Naive thymus-derived CD8-positive, alpha-beta T cell (primary cell): ENCODE measurements at regions of chr2 and their contacts with region 1.

Region 1: DNA sequence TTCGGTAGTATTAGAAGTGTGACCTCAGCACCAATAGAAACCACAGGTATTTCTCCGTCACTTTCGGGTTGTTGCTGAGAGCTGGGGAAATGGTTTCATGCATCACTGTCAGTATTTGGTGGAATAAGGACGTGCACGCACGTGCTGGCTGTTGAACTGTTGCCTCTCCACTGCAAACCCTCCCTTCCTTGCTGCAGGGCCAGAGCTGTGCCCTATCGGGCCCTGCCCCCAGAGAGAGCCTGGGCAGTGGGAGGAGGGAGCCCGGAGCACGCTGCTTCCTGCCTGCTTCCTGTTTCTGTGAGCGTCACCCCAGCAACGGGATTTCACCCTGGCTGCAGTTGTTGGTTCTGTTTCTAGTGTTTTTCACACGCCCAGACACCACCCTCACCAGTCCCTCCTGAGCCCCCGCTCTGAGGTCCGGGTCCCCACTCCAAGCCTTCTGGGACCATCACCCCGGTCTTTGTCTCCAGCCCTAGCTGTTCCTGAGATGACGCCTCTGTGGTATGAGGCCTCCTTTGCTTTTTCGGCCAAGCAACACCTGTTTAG is 47.4 kb downstream of the LRRFIP1 start:
- DNase-seq: peak; percentile 70 to 97 (median 89)
- ATAC-seq: peak; percentile 62 to 65
- H3K4me3 Mint-ChIP-seq: peak overlapping the region; percentile 84 to 95 (median 90)
- H3K27ac Mint-ChIP-seq: peak overlapping the region; percentile 98 to 100 (median 100)
- H3K4me1 Mint-ChIP-seq: peaks cover 28 to 81% (median 55%) of the 10 kb centered on the region in 4 donors
- H3K27me3 Mint-ChIP-seq: peaks cover 0 to 4% (median 0%) of the 10 kb centered on the region in 5 donors

Region 2: DNA sequence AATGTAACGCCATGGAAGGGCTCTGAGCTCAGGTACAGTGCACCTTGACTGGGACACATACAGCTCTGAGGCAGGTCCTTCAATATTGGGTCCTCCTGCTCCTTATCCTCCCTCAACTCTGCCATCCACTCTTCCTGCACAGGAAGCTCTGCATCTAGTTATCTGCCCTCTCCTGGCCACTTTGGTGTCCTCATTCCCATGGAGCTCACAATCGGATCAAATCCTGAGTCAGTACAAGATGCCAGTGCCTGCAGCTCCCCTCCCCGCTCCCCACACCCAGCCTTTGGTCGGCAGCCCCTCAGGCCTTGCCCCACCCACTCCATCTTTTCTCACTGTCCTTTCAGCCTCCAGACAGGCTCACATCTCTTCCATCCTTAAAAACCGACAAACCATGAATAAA is 10.6 kb after region 1 on chr2:
- POLR2A ChIA-PET with region 1: interaction called, 338 read pairs
- DNase-seq: no peak
- ATAC-seq: no peak
- H3K4me3 Mint-ChIP-seq: no peak overlapping the region
- H3K27ac Mint-ChIP-seq: peak overlapping the region; percentile 19 to 100 (median 98)
- H3K4me1 Mint-ChIP-seq: peaks cover 18 to 58% (median 46%) of the 10 kb centered on the region in 4 donors
- H3K27me3 Mint-ChIP-seq: no peaks in the 10 kb centered on the region

Region 3: GRCh38 chr2:237691908-237692600 is 17.2 kb after region 1 on chr2:
- POLR2A ChIA-PET with region 1: interaction called, 338 read pairs
- DNase-seq: peak; percentile 81 to 99 (median 91)
- ATAC-seq: peak; percentile 57 to 60
- H3K4me3 Mint-ChIP-seq: peak overlapping the region; percentile 83 to 98 (median 92)
- H3K27ac Mint-ChIP-seq: peak overlapping the region in 9 of 10 donors; percentile 91 to 100 (median 95)
- H3K4me1 Mint-ChIP-seq: peaks cover 39 to 82% (median 78%) of the 10 kb centered on the region in 4 donors
- H3K27me3 Mint-ChIP-seq: no peaks in the 10 kb centered on the region

Region 4: GRCh38 chr2:237744613-237745249 is 69.9 kb after region 1 on chr2:
- POLR2A ChIA-PET with region 1: interaction called, 24 read pairs
- DNase-seq: peak; percentile 57 to 88 (median 76)
- ATAC-seq: peak; percentile 74 to 89
- H3K4me3 Mint-ChIP-seq: peak overlapping the region in 2 of 10 donors; percentile 39 to 54
- H3K27ac Mint-ChIP-seq: peak overlapping the region; percentile 81 to 96 (median 91)
- H3K4me1 Mint-ChIP-seq: peaks cover 25 to 54% (median 48%) of the 10 kb centered on the region in 4 donors
- H3K27me3 Mint-ChIP-seq: no peaks in the 10 kb centered on the region